ENCODE measurements at regions of chr1 and their contacts with region 1.

Region 1: GRCh38 chr1:67149179-67149770 is 14.5 kb upstream of the C1orf141 start:
- DNase-seq: peak in 8 of 9 donors; percentile 49 to 81 (median 72)
- ATAC-seq: peak; percentile 91
- H3K4me3 ChIP-seq: no peak overlapping the region
- H3K4me3 Mint-ChIP-seq: peak overlapping the region in 3 of 10 donors; percentile 32 to 35 (median 33)
- H3K27ac ChIP-seq: no peak overlapping the region
- H3K27ac Mint-ChIP-seq: peak overlapping the region in 4 of 9 donors; percentile 34 to 75 (median 61)
- H3K4me1 ChIP-seq: peaks cover 0 to 6% of the 10 kb centered on the region in 2 donors
- H3K4me1 Mint-ChIP-seq: peaks cover 7 to 36% (median 34%) of the 10 kb centered on the region in 7 donors
- H3K27me3 ChIP-seq: no peaks in the 10 kb centered on the region
- H3K27me3 Mint-ChIP-seq: peaks cover 0 to 9% (median 0%) of the 10 kb centered on the region in 5 donors

Region 2: DNA sequence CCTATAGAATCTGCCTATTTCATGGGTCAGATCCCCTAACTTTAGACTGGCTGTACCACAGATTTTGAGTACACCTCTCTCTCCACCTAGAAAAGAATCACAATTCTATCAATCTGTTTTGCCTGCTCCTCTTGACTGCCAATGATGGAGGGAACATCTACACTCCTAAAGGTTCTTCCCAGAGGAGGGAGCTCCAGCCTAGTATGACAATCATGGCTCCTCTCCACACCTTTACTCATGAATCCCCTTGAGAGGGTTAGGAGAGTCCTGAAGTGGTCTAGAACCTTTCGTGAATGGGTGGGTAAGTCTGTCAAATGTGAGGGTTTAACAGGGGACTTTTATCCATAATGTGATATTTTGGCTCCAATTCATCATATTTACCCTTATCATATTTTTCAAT is 272.6 kb before region 1 on chr1:
- CTCF ChIA-PET with region 1: no interaction called
- POLR2A ChIA-PET with region 1: no interaction called
- intact Hi-C with region 1: no loop called
- DNase-seq: no peak
- ATAC-seq: no peak
- H3K4me3 ChIP-seq: no peak overlapping the region
- H3K4me3 Mint-ChIP-seq: no peak overlapping the region
- H3K27ac ChIP-seq: no peak overlapping the region
- H3K27ac Mint-ChIP-seq: no peak overlapping the region
- H3K4me1 ChIP-seq: no peaks in the 10 kb centered on the region
- H3K4me1 Mint-ChIP-seq: peaks cover 0 to 1% (median 0%) of the 10 kb centered on the region in 7 donors
- H3K27me3 ChIP-seq: no peaks in the 10 kb centered on the region
- H3K27me3 Mint-ChIP-seq: peaks cover 0 to 2% (median 0%) of the 10 kb centered on the region in 5 donors

Region 3: DNA sequence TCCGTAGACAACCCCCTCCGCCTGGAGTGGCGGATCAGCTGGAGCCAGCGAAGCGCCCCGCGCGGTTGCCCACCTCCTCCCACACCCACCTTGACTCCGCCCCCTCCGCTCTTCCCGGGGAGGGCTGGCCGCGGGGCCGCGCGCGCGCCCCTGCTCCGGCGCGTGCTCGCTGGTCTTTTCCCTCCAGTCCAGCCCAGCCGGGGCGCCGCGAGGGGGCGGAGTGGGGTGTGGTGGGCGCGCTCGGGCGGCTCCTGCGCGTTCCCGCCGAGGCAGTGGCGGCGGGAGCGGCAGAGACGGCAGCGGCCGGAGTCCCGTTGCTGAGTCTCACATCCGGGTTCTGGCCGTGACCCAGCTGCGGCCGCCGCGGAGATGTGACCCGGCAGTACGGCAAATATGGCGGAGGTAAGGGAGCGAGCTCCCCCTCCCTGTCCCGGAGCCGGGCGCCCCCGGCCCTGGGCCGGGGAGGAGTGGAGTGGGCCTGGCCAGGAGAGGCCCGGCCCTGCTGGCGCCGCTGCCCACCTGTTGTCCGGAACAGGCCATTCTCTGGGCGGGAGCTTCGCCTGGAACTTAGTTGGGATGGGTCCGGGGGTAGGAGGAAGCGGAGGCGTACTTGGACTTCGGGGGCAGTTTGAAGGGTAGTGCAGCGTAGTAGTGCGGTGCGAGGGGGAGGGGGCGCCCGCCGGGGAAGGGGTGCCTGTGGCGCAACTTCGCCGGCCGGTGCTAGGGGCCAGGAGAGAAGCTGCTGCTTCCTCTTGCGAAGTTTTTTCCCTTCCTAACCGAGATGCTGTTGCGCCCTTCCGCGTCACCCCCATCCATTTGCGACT is 219.1 kb before region 1 on chr1:
- CTCF ChIA-PET with region 1: interaction called, 10 read pairs
- POLR2A ChIA-PET with region 1: interaction called, 5 read pairs
- intact Hi-C with region 1: loop called (anchors 1 to 5 kb)
- DNase-seq: peak; percentile 88 to 97 (median 92)
- ATAC-seq: peak; percentile 88
- H3K4me3 ChIP-seq: peak overlapping the region; percentile 69
- H3K4me3 Mint-ChIP-seq: peak overlapping the region; percentile 85 to 98 (median 92)
- H3K27ac ChIP-seq: peak overlapping the region; percentile 91
- H3K27ac Mint-ChIP-seq: peak overlapping the region; percentile 79 to 95 (median 90)
- H3K4me1 ChIP-seq: peaks cover 45 to 48% of the 10 kb centered on the region in 2 donors
- H3K4me1 Mint-ChIP-seq: peaks cover 38 to 88% (median 70%) of the 10 kb centered on the region in 7 donors
- H3K27me3 ChIP-seq: no peaks in the 10 kb centered on the region
- H3K27me3 Mint-ChIP-seq: no peaks in the 10 kb centered on the region

Region 4: GRCh38 chr1:67005068-67005467 is 144.2 kb before region 1 on chr1:
- CTCF ChIA-PET with region 1: interaction called, 43 read pairs
- POLR2A ChIA-PET with region 1: no interaction called
- intact Hi-C with region 1: no loop called
- DNase-seq: no peak
- ATAC-seq: no peak
- H3K4me3 ChIP-seq: no peak overlapping the region
- H3K4me3 Mint-ChIP-seq: no peak overlapping the region
- H3K27ac ChIP-seq: no peak overlapping the region
- H3K27ac Mint-ChIP-seq: peak overlapping the region in 6 of 9 donors; percentile 2 to 88 (median 28)
- H3K4me1 ChIP-seq: no peaks in the 10 kb centered on the region
- H3K4me1 Mint-ChIP-seq: peaks cover 1 to 22% (median 14%) of the 10 kb centered on the region in 7 donors
- H3K27me3 ChIP-seq: no peaks in the 10 kb centered on the region
- H3K27me3 Mint-ChIP-seq: no peaks in the 10 kb centered on the region

Region 5: GRCh38 chr1:67162957-67163356 is 13.7 kb after region 1 on chr1:
- CTCF ChIA-PET with region 1: interaction called, 27 read pairs
- POLR2A ChIA-PET with region 1: interaction called, 5 read pairs
- intact Hi-C with region 1: no loop called
- DNase-seq: peak in 1 of 9 donors; percentile 43
- ATAC-seq: no peak
- H3K4me3 ChIP-seq: no peak overlapping the region
- H3K4me3 Mint-ChIP-seq: peak overlapping the region in 1 of 10 donors; percentile 45
- H3K27ac ChIP-seq: no peak overlapping the region
- H3K27ac Mint-ChIP-seq: peak overlapping the region in 1 of 9 donors; percentile 83
- H3K4me1 ChIP-seq: no peaks in the 10 kb centered on the region
- H3K4me1 Mint-ChIP-seq: peaks cover 7 to 46% (median 10%) of the 10 kb centered on the region in 7 donors
- H3K27me3 ChIP-seq: no peaks in the 10 kb centered on the region
- H3K27me3 Mint-ChIP-seq: peaks cover 0 to 17% (median 5%) of the 10 kb centered on the region in 5 donors

Region 6: GRCh38 chr1:67214420-67215174 is 65.3 kb after region 1 on chr1:
- CTCF ChIA-PET with region 1: interaction called, 157 read pairs
- POLR2A ChIA-PET with region 1: interaction called, 5 read pairs
- intact Hi-C with region 1: loop called (anchors 1 kb)
- DNase-seq: peak in 7 of 9 donors; percentile 18 to 58 (median 45)
- ATAC-seq: peak; percentile 57
- H3K4me3 ChIP-seq: no peak overlapping the region
- H3K4me3 Mint-ChIP-seq: no peak overlapping the region
- H3K27ac ChIP-seq: no peak overlapping the region
- H3K27ac Mint-ChIP-seq: peak overlapping the region in 3 of 9 donors; percentile 27 to 77 (median 70)
- H3K4me1 ChIP-seq: peaks cover 0 to 8% of the 10 kb centered on the region in 2 donors
- H3K4me1 Mint-ChIP-seq: peaks cover 14 to 43% (median 23%) of the 10 kb centered on the region in 7 donors
- H3K27me3 ChIP-seq: no peaks in the 10 kb centered on the region
- H3K27me3 Mint-ChIP-seq: no peaks in the 10 kb centered on the region